Activated CD4-positive, alpha-beta T cell treated with anti-CD3 and anti-CD28 coated beads, Interleukin-2, amount 10 ng/mL, durations not matched to agents 24 days and 14 days (primary cell): ENCODE measurements at regions of chrX and their contacts with region 1.

Region 1: GRCh38 chrX:70133303-70134115 is at the start of gene IGBP1:
- DNase-seq: peak; percentile 92
- H3K4me3 Mint-ChIP-seq: peak within 1 kb of the TSS; percentile 99
- H3K27ac Mint-ChIP-seq: peak within 1 kb of the TSS; percentile 96
- H3K4me1 Mint-ChIP-seq: peaks cover 27% of the 10 kb centered on the region
- H3K27me3 Mint-ChIP-seq: no peaks in the 10 kb centered on the region
- total RNA-seq, gene IGBP1: 29.8 and 30.5 TPM in 2 replicates

Region 2: GRCh38 chrX:69538321-69538876 is 595.1 kb before region 1 on chrX:
- intact Hi-C with region 1: loop called (anchors 1 kb)
- DNase-seq: peak; percentile 91
- H3K4me3 Mint-ChIP-seq: peak overlapping the region; percentile 60
- H3K27ac Mint-ChIP-seq: peak overlapping the region; percentile 34
- H3K4me1 Mint-ChIP-seq: peaks cover 14% of the 10 kb centered on the region
- H3K27me3 Mint-ChIP-seq: no peaks in the 10 kb centered on the region

Region 3: DNA sequence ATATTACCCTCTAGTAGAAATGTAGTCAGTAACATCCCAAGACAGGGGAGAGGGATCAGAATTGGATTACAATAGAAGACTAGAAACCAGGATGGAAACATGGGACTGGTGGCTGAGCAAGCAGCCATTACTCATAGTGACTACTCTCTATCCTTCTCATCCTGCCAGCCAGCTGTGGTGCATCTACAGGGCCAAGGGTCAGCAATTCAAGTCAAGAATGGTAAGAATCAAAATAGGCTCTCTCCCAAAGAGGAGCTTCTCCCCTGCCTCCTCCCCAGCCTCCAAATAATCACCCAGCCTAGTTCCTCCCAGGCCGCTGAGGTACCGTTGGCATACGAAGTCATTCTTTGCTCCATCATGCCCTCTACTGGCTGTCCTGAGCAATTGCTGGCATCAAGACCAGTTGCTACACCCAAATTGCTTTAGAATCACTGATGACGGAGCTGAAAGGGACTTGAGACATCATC is 103.2 kb before region 1 on chrX:
- intact Hi-C with region 1: loop called (anchors 1 kb)
- DNase-seq: peak; percentile 83
- H3K4me3 Mint-ChIP-seq: no peak overlapping the region
- H3K27ac Mint-ChIP-seq: no peak overlapping the region
- H3K4me1 Mint-ChIP-seq: peaks cover 20% of the 10 kb centered on the region
- H3K27me3 Mint-ChIP-seq: no peaks in the 10 kb centered on the region

Region 4: DNA sequence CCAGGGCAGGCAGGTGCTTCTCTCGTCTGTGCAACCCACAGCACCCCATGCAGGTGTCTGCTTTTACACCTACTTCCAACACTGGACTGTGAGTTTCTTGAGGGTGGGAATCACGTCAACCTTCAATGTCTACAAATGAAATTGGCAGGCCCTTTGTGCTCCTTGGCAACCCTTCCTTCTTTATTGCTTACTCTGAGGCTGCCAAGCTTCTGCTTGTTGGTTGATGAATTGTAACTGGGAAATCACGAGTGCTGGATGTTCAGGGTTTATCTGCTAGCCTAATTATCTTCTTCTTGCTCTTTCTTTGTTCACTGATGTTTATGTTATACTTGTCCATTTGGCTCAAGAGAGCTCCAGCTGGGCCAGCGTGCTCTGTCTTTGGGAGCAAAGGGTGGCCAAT is 41.2 kb after region 1 on chrX:
- intact Hi-C with region 1: loop called (anchors 2 kb)
- DNase-seq: no peak
- H3K4me3 Mint-ChIP-seq: no peak overlapping the region
- H3K27ac Mint-ChIP-seq: no peak overlapping the region
- H3K4me1 Mint-ChIP-seq: peaks cover 3% of the 10 kb centered on the region
- H3K27me3 Mint-ChIP-seq: peaks cover 5% of the 10 kb centered on the region

Region 5: GRCh38 chrX:70289793-70290776 is 156.6 kb after region 1 on chrX and contains the starts of genes KIF4A and PDZD11:
- intact Hi-C with region 1: loop called (anchors 1 kb)
- DNase-seq: peak; percentile 96
- H3K4me3 Mint-ChIP-seq: peak within 1 kb of the TSS; percentile 94
- H3K27ac Mint-ChIP-seq: peak within 1 kb of the TSS; percentile 87
- H3K4me1 Mint-ChIP-seq: peaks cover 22% of the 10 kb centered on the region
- H3K27me3 Mint-ChIP-seq: no peaks in the 10 kb centered on the region
- total RNA-seq, gene KIF4A: 19.4 and 19.8 TPM in 2 replicates
- total RNA-seq, gene PDZD11: 28.9 and 30.0 TPM in 2 replicates